Endothelial cell of umbilical vein (primary cell): ENCODE measurements at regions of chr1 and their contacts with region 1.

Region 1: DNA sequence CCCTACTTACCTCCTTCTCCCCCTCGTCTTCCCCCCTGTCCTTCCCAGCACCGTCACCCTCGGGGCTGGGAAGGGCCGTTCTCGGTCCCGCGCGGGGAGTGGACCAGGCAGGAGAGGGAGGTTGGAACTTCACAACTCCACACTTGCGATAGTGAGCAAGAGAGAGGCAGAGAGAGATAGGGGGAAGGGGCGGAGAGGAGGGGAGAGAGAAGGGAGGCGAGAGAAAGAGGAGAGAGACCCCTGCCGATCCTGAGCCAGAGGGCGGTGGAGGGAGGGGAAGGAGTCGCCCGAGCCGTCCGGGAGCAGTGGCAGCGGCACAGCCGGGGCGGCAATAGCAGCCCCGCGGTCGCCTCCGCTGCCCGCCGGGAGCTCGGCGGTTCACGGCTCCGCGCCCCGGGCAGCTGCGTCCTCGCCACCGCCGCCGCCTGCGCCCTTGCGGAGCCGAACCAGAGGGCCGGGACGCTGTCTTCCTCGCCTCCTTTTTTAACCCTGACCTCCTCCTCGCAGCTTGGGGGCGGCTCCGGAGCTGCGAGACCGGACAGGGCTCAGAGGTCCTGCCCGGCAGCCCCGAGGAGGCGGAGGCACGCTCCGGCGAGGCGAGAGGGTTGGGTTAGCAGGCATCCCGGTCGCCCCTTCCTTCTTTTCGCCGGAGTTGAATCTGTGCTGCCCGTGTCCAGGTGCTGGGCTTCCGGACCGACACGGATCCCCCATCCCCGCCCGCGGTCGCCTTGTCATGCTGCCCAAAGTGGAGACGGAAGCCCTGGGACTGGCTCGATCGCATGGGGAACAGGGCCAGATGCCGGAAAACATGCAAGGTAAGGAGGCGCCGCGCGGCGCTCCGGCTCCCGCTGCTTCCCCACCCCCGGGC is 11.7 kb downstream of the NR5A2 start:
- DNase-seq: peak; percentile 65
- H3K4me3 ChIP-seq: peak overlapping the region; percentile 11 to 75 (median 59)
- H3K27ac ChIP-seq: no peak overlapping the region
- H3K4me1 ChIP-seq: peaks cover 22% of the 10 kb centered on the region
- H3K27me3 ChIP-seq: peaks cover 15 to 97% of the 10 kb centered on the region in 2 experiments
- CTCF ChIP-seq: no peak
- POLR2A ChIP-seq: no peak

Region 2: DNA sequence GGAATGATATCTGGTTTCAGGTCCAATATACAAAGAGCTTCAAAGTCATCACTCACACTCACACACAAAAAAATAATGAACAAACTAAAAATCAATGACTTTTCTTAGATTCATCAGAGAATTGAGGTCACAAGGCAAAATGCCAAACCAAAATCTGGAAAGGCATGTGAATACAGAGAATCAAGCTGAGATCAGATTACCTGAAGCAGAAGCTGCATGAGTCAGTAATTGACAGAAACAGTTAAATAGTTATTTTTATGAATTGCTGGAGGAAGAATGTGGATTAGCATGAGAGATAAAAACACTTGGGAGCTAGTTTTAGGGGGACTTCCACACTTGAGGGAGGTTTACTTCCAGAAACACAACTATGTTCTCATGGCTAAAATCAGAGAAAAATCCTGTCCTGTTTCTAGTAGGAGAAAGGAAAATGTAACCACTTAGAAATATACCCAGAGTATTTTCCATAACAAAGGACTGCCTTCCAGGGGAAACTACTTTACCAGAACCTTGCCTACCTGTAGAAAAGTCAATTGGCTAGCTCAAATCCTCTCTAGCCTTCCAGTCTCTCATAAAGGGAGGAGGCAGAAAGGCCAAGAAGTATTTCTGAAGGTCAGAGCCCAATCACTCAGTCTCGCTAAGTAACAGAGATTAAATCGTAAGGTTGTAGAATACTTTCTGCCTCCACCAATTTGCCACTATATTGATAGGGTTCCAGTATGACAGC is 548.2 kb before region 1 on chr1:
- CTCF ChIA-PET with region 1: no interaction called
- POLR2A ChIA-PET with region 1: no interaction called
- dilution Hi-C with region 1: no loop called
- intact Hi-C with region 1: no loop called
- DNase-seq: no peak
- H3K4me3 ChIP-seq: no peak overlapping the region
- H3K27ac ChIP-seq: no peak overlapping the region
- H3K4me1 ChIP-seq: no peaks in the 10 kb centered on the region
- H3K27me3 ChIP-seq: peaks cover 0 to 3% of the 10 kb centered on the region in 2 experiments
- CTCF ChIP-seq: no peak
- POLR2A ChIP-seq: no peak

Region 3: GRCh38 chr1:199733125-199733524 is 306.1 kb before region 1 on chr1:
- CTCF ChIA-PET with region 1: no interaction called
- POLR2A ChIA-PET with region 1: no interaction called
- dilution Hi-C with region 1: no loop called
- intact Hi-C with region 1: loop called (anchors 5 kb)
- DNase-seq: peak; percentile 54
- H3K4me3 ChIP-seq: no peak overlapping the region
- H3K27ac ChIP-seq: peak overlapping the region; percentile 63
- H3K4me1 ChIP-seq: peaks cover 38% of the 10 kb centered on the region
- H3K27me3 ChIP-seq: no peaks in the 10 kb centered on the region
- CTCF ChIP-seq: no peak
- POLR2A ChIP-seq: no peak

Region 4: DNA sequence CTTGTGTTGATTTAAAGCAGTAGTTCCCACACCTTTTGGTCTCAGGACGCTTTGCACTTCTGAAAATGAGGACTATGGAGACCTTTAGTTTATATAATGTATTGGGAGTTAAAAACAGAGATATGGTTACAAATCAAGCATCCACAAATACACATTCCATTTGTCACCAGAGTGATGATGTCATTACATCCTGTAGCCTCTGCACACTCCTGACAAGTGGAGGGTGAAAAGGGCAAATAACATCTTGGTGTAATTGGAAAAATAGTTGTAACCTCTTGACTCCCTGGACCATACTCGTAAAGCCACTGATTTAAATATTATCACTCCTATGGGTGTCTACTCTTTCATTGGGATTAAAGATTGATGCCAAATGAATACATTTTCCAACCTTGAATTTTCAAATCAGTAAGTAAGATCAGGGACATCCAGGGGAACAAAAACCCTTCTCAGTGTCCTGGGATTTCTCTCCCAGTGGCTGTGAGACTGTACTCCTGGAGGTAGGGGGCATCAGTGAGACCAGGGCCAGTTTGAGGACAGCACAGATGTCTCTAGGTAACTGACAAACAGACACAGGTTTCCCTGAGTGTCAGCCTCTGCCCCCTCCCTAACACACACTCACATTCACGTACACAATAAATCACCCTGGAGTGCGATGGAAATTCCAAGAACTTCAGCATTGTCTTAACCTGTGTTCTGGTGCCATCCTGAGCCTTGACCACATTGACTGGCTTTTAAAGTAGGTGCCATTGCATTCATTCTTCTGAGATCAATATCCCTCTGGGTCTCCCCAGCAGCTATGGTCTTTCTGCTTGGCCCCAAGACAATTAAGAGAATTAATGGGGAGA is 51.3 kb after region 1 on chr1:
- CTCF ChIA-PET with region 1: no interaction called
- POLR2A ChIA-PET with region 1: no interaction called
- dilution Hi-C with region 1: no loop called
- intact Hi-C with region 1: loop called (anchors 1 kb)
- DNase-seq: peak; percentile 83
- H3K4me3 ChIP-seq: no peak overlapping the region
- H3K27ac ChIP-seq: no peak overlapping the region
- H3K4me1 ChIP-seq: peaks cover 10% of the 10 kb centered on the region
- H3K27me3 ChIP-seq: no peaks in the 10 kb centered on the region
- CTCF ChIP-seq: peak in 1 of 2 donors; percentile 29
- POLR2A ChIP-seq: no peak

Region 5: DNA sequence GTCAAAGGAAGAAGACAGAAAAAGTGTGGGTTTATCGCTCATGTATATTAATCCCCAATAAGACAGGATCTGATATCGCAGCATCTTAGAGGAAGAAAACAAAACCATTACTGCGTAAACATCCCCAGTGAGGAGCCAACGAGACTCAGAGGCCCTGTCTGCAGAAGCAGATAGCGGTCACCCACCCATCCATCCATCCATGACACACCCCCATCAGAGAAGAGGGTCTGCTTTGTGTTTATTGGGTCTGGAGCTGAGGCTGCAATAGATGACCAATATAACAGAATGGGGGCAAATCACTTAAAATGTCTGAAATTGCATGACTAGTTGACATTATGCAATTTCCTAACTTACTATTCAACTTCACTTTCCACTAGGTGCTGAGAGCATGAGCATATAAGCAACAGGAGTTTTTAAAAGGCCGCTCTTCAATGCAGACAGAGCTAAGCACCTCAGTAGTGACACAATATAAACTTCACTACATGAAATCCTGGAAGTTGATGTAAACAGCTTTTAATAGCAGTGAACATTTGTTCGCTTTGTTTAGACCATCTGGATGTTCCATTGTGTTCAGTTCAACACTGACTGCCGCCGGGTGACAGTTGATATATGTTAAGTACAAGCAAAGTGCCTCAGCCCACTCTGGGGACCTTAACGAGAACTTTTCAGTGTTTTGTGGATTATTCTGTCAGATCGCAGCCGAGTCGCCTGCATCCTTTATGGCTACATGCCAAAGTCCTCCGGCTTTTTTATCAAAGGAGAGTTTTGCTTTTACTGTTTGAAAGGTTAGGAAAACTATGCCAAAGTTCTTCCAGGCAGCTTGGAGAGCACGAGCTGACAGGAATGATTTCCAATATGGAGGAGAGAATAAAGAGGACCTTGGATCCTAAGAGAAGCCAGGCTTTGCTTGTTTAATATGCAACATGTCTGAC is 203.2 kb after region 1 on chr1:
- CTCF ChIA-PET with region 1: no interaction called
- POLR2A ChIA-PET with region 1: no interaction called
- dilution Hi-C with region 1: no loop called
- intact Hi-C with region 1: loop called (anchors 10 kb)
- DNase-seq: peak; percentile 78
- H3K4me3 ChIP-seq: peak overlapping the region in 1 of 3 experiments; percentile 26
- H3K27ac ChIP-seq: peak overlapping the region; percentile 40
- H3K4me1 ChIP-seq: peaks cover 22% of the 10 kb centered on the region
- H3K27me3 ChIP-seq: peaks cover 0 to 4% of the 10 kb centered on the region in 2 experiments
- CTCF ChIP-seq: no peak
- POLR2A ChIP-seq: no peak

Region 6: GRCh38 chr1:200351826-200352549 is 312.8 kb after region 1 on chr1:
- CTCF ChIA-PET with region 1: no interaction called
- POLR2A ChIA-PET with region 1: no interaction called
- dilution Hi-C with region 1: no loop called
- intact Hi-C with region 1: no loop called
- DNase-seq: peak; percentile 56
- H3K4me3 ChIP-seq: peak overlapping the region in 1 of 3 experiments; percentile 30
- H3K27ac ChIP-seq: no peak overlapping the region
- H3K4me1 ChIP-seq: peaks cover 3% of the 10 kb centered on the region
- H3K27me3 ChIP-seq: no peaks in the 10 kb centered on the region
- CTCF ChIP-seq: no peak
- POLR2A ChIP-seq: no peak

Region 7: DNA sequence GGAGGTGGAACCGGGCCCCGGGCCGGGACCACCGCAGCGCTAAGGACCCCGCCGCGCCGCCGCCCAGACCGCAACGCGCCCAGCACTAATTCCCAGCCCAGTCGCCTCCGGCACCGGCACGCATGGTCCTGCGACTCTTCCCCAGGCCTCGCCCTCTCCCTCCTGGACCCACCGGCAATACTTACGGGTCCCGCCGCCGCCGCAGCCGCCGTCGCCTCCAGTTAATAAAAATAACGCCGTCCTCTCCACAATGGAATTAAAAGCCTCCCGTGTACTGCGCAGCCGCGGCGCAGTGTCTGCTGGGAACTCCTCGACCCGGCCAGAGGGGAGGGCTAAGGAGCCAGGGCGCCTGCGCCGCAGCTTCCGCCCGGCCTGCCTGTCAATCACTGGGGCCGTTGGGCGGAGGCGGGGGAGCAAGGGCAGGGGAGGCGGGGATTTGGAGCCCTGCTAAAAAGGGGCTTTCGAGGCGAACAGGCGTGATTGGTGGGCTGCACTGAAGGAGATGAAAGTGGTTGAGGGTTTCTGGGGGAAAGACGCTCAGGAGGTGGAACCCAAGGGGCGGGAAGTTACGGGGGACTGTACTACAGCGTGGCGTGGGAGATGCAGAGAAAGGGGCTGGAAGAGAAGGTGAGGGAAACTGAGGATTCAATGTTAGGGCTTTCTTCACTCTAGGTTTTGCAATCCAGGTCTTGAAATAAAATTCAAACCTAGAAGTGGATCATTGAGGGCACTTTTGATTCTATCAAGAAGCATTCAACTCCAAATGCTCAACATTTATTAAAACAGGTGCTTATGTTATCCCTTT is 370.7 kb after region 1 on chr1 and contains the start of gene ZNF281:
- CTCF ChIA-PET with region 1: no interaction called
- POLR2A ChIA-PET with region 1: no interaction called
- dilution Hi-C with region 1: no loop called
- intact Hi-C with region 1: loop called (anchors 5 kb)
- DNase-seq: peak; percentile 95
- H3K4me3 ChIP-seq: peak within 1 kb of the TSS; percentile 87 to 98 (median 95)
- H3K27ac ChIP-seq: peak within 1 kb of the TSS; percentile 86
- H3K4me1 ChIP-seq: peaks cover 39% of the 10 kb centered on the region
- H3K27me3 ChIP-seq: no peaks in the 10 kb centered on the region
- CTCF ChIP-seq: no peak
- POLR2A ChIP-seq: peak; percentile 68
- total RNA-seq, gene ZNF281: 22.3 and 23.2 TPM in 2 replicates